ENCODE measurements at regions of chr6 and their contacts with region 1.

Region 1: GRCh38 chr6:108052706-108053105 is 21.8 kb downstream of the OSTM1 start:
- DNase-seq: no peak
- ATAC-seq: no peak
- H3K4me3 Mint-ChIP-seq: no peak overlapping the region
- H3K27ac Mint-ChIP-seq: no peak overlapping the region
- H3K4me1 Mint-ChIP-seq: no peaks in the 10 kb centered on the region
- H3K27me3 Mint-ChIP-seq: no peaks in the 10 kb centered on the region
- CTCF ChIP-seq: no peak

Region 2: DNA sequence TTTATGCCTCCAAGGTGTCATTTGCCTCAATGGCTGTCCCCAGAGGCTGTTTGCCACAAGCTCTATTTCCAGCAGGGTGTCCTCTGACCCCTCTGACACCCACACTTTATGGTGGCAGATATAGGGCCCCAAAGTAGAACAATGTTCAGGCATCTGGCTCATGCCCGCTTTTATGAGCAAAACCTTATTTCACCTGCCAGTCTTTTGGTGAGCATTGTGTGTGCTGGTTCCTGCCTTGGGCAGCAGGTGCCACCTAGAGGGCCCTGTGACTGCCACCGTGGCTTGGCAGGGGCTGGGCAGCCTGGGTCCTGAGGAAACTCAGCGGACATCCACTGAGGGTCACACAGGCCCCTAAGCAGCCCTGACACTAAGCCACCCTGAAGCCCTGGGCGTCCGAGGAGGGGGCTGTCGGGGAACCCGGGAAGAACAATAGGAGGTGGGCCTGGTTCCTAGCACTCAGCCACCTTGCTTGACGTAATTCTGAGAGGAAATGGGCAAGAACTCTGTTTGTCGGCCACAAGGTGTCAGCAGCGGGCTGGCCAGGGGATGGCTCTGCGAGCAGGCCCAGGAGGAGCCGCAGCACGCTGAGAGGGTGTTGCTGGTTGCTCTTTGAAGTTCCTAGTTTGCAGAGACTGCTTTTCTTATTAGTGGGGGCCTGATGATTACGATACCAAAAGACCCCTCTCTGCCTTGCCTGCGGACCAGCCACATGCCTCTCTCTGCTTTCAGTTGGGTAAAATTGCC is 377.5 kb before region 1 on chr6:
- CTCF ChIA-PET with region 1: interaction called, 20 read pairs
- POLR2A ChIA-PET with region 1: no interaction called
- intact Hi-C with region 1: loop called (anchors 10 kb)
- DNase-seq: peak; percentile 89
- ATAC-seq: peak; percentile 98
- H3K4me3 Mint-ChIP-seq: peak overlapping the region; percentile 53
- H3K27ac Mint-ChIP-seq: peak overlapping the region; percentile 91
- H3K4me1 Mint-ChIP-seq: peaks cover 16% of the 10 kb centered on the region
- H3K27me3 Mint-ChIP-seq: no peaks in the 10 kb centered on the region
- CTCF ChIP-seq: peak; percentile 91

Region 3: GRCh38 chr6:107981695-107982094 is 71.0 kb before region 1 on chr6:
- CTCF ChIA-PET with region 1: interaction called, 16 read pairs
- POLR2A ChIA-PET with region 1: no interaction called
- intact Hi-C with region 1: loop called (anchors 2 kb)
- DNase-seq: no peak
- ATAC-seq: no peak
- H3K4me3 Mint-ChIP-seq: no peak overlapping the region
- H3K27ac Mint-ChIP-seq: no peak overlapping the region
- H3K4me1 Mint-ChIP-seq: no peaks in the 10 kb centered on the region
- H3K27me3 Mint-ChIP-seq: no peaks in the 10 kb centered on the region
- CTCF ChIP-seq: no peak

Region 4: DNA sequence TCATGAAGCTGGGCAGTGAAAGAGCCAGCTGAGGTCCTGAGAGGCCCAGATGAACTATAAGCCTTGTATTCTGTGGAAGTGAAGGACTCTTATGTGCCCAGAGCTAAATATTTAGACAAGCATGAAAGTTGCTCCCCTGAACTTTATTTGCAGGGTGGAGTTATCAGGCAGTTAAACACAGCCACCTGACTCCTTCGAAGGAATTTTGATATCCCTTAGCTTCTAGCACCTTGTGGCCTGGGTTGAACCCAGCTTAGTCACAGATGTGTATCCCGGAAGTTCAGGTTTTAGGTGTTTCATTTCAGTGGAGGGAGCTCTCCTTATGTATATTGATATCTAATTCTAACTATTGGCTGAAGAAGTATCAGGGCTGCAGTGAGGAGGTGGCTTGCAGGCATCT is 133.5 kb after region 1 on chr6:
- CTCF ChIA-PET with region 1: no interaction called
- POLR2A ChIA-PET with region 1: no interaction called
- intact Hi-C with region 1: no loop called
- DNase-seq: no peak
- ATAC-seq: no peak
- H3K4me3 Mint-ChIP-seq: no peak overlapping the region
- H3K27ac Mint-ChIP-seq: no peak overlapping the region
- H3K4me1 Mint-ChIP-seq: no peaks in the 10 kb centered on the region
- H3K27me3 Mint-ChIP-seq: peaks cover 17% of the 10 kb centered on the region
- CTCF ChIP-seq: no peak